CD8-positive, alpha-beta T cell (primary cell): ENCODE measurements at regions of chr12 and their contacts with region 1.

Region 1: DNA sequence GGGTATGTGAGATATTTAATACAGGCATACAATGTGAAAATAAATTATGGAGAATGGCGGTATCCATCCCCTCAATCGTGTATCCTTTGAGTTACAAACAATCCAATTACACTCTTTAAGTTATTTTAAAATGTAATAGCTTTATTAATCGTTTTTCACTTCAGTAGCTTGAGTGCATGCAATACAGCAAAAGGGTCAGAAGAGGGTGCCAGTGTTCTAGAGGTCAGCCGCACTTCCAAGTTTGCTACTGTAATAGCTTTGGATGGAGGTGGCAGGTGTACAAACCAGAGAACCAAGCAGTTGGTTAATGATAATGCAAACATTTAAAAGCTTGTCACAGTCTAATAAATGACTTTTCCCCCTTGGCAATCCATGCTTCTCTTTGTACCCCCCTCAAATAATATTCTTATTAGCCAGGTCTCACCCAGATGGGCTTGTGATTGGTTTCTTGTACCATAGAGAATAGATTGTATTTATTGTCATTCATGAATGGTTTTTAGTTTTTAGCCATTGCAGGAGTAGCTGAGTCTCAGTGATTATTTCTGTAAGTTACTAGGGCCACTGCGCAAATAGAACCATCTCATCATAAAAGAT is 127.0 kb downstream of the ERC1 start:
- DNase-seq: peak; percentile 48 to 83 (median 74)
- ATAC-seq: peak; percentile 52
- H3K4me3 ChIP-seq: no peak overlapping the region
- H3K4me3 Mint-ChIP-seq: no peak overlapping the region
- H3K27ac ChIP-seq: no peak overlapping the region
- H3K27ac Mint-ChIP-seq: no peak overlapping the region
- H3K4me1 ChIP-seq: peaks cover 7% of the 10 kb centered on the region
- H3K4me1 Mint-ChIP-seq: peaks cover 7% of the 10 kb centered on the region
- H3K27me3 ChIP-seq: no peaks in the 10 kb centered on the region
- H3K27me3 Mint-ChIP-seq: no peaks in the 10 kb centered on the region
- CTCF ChIP-seq: peak; percentile 98

Region 2: GRCh38 chr12:1099158-1099557 is 18.9 kb before region 1 on chr12:
- CTCF ChIA-PET with region 1: interaction called, 38 read pairs
- POLR2A ChIA-PET with region 1: no interaction called
- intact Hi-C with region 1: no loop called
- DNase-seq: no peak
- ATAC-seq: no peak
- H3K4me3 ChIP-seq: no peak overlapping the region
- H3K4me3 Mint-ChIP-seq: no peak overlapping the region
- H3K27ac ChIP-seq: no peak overlapping the region
- H3K27ac Mint-ChIP-seq: no peak overlapping the region
- H3K4me1 ChIP-seq: peaks cover 8% of the 10 kb centered on the region
- H3K4me1 Mint-ChIP-seq: peaks cover 47% of the 10 kb centered on the region
- H3K27me3 ChIP-seq: no peaks in the 10 kb centered on the region
- H3K27me3 Mint-ChIP-seq: no peaks in the 10 kb centered on the region
- CTCF ChIP-seq: no peak

Region 3: DNA sequence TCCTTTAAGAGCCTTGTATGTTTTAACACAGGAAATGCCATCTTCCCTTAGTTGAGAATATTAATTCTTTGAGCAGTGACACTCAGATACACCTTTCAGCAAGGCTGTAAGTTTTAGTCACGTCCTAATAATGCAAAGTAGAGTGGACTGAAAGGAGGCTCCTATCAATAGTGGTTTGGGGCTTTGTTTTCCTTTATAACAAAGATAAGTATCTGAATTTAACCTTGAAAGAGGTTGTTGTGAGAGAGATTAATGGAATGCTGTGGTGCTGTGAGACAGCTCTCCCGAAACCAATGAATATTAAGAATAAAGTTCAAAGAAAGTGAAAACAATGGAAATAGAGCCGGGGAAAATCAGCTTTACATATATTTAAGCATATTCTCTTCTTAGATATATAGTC is 132.6 kb after region 1 on chr12:
- CTCF ChIA-PET with region 1: interaction called, 7 read pairs
- POLR2A ChIA-PET with region 1: no interaction called
- intact Hi-C with region 1: loop called in 1 of 2 experiments (anchors 10 kb)
- DNase-seq: no peak
- ATAC-seq: no peak
- H3K4me3 ChIP-seq: no peak overlapping the region
- H3K4me3 Mint-ChIP-seq: no peak overlapping the region
- H3K27ac ChIP-seq: no peak overlapping the region
- H3K27ac Mint-ChIP-seq: no peak overlapping the region
- H3K4me1 ChIP-seq: no peaks in the 10 kb centered on the region
- H3K4me1 Mint-ChIP-seq: no peaks in the 10 kb centered on the region
- H3K27me3 ChIP-seq: no peaks in the 10 kb centered on the region
- H3K27me3 Mint-ChIP-seq: no peaks in the 10 kb centered on the region
- CTCF ChIP-seq: no peak

Region 4: GRCh38 chr12:1544996-1545700 is 427.1 kb after region 1 on chr12:
- CTCF ChIA-PET with region 1: interaction called, 23 read pairs
- POLR2A ChIA-PET with region 1: no interaction called
- intact Hi-C with region 1: no loop called
- DNase-seq: peak in 1 of 9 experiments; percentile 19
- ATAC-seq: no peak
- H3K4me3 ChIP-seq: no peak overlapping the region
- H3K4me3 Mint-ChIP-seq: no peak overlapping the region
- H3K27ac ChIP-seq: no peak overlapping the region
- H3K27ac Mint-ChIP-seq: no peak overlapping the region
- H3K4me1 ChIP-seq: no peaks in the 10 kb centered on the region
- H3K4me1 Mint-ChIP-seq: no peaks in the 10 kb centered on the region
- H3K27me3 ChIP-seq: peaks cover 2 to 8% of the 10 kb centered on the region in 2 experiments
- H3K27me3 Mint-ChIP-seq: peaks cover 49% of the 10 kb centered on the region
- CTCF ChIP-seq: no peak

Region 5: GRCh38 chr12:1583421-1584078 is 465.5 kb after region 1 on chr12:
- CTCF ChIA-PET with region 1: interaction called, 184 read pairs
- POLR2A ChIA-PET with region 1: interaction called, 15 read pairs
- intact Hi-C with region 1: loop called (anchors 1 kb)
- DNase-seq: peak in 8 of 9 experiments; percentile 45 to 88 (median 67)
- ATAC-seq: peak; percentile 82
- H3K4me3 ChIP-seq: no peak overlapping the region
- H3K4me3 Mint-ChIP-seq: peak overlapping the region; percentile 20
- H3K27ac ChIP-seq: no peak overlapping the region
- H3K27ac Mint-ChIP-seq: no peak overlapping the region
- H3K4me1 ChIP-seq: peaks cover 20% of the 10 kb centered on the region
- H3K4me1 Mint-ChIP-seq: peaks cover 21% of the 10 kb centered on the region
- H3K27me3 ChIP-seq: no peaks in the 10 kb centered on the region
- H3K27me3 Mint-ChIP-seq: no peaks in the 10 kb centered on the region
- CTCF ChIP-seq: peak; percentile 98

Region 6: GRCh38 chr12:1634590-1635191 is 516.6 kb after region 1 on chr12:
- CTCF ChIA-PET with region 1: interaction called, 12 read pairs
- POLR2A ChIA-PET with region 1: interaction called, 3 read pairs
- intact Hi-C with region 1: no loop called
- DNase-seq: peak; percentile 18 to 71 (median 64)
- ATAC-seq: peak; percentile 52
- H3K4me3 ChIP-seq: no peak overlapping the region
- H3K4me3 Mint-ChIP-seq: no peak overlapping the region
- H3K27ac ChIP-seq: no peak overlapping the region
- H3K27ac Mint-ChIP-seq: no peak overlapping the region
- H3K4me1 ChIP-seq: peaks cover 13% of the 10 kb centered on the region
- H3K4me1 Mint-ChIP-seq: peaks cover 13% of the 10 kb centered on the region
- H3K27me3 ChIP-seq: peaks cover 12 to 21% of the 10 kb centered on the region in 2 experiments
- H3K27me3 Mint-ChIP-seq: peaks cover 42% of the 10 kb centered on the region
- CTCF ChIP-seq: peak; percentile 70

Region 7: GRCh38 chr12:1760566-1761382 is 642.7 kb after region 1 on chr12:
- CTCF ChIA-PET with region 1: no interaction called
- POLR2A ChIA-PET with region 1: no interaction called
- intact Hi-C with region 1: no loop called
- DNase-seq: no peak
- ATAC-seq: no peak
- H3K4me3 ChIP-seq: no peak overlapping the region
- H3K4me3 Mint-ChIP-seq: no peak overlapping the region
- H3K27ac ChIP-seq: no peak overlapping the region
- H3K27ac Mint-ChIP-seq: no peak overlapping the region
- H3K4me1 ChIP-seq: no peaks in the 10 kb centered on the region
- H3K4me1 Mint-ChIP-seq: peaks cover 19% of the 10 kb centered on the region
- H3K27me3 ChIP-seq: no peaks in the 10 kb centered on the region
- H3K27me3 Mint-ChIP-seq: no peaks in the 10 kb centered on the region
- CTCF ChIP-seq: no peak